ENCODE measurements at regions of chr17 and their contacts with region 1.

Region 1: GRCh38 chr17:28967221-28968140 is 16.2 kb upstream of the PHF12 start:
- H3K4me3 ChIP-seq: no peak overlapping the region
- H3K27ac ChIP-seq: no peak overlapping the region
- H3K4me1 ChIP-seq: no peaks in the 10 kb centered on the region
- CTCF ChIP-seq: no peak

Region 2: DNA sequence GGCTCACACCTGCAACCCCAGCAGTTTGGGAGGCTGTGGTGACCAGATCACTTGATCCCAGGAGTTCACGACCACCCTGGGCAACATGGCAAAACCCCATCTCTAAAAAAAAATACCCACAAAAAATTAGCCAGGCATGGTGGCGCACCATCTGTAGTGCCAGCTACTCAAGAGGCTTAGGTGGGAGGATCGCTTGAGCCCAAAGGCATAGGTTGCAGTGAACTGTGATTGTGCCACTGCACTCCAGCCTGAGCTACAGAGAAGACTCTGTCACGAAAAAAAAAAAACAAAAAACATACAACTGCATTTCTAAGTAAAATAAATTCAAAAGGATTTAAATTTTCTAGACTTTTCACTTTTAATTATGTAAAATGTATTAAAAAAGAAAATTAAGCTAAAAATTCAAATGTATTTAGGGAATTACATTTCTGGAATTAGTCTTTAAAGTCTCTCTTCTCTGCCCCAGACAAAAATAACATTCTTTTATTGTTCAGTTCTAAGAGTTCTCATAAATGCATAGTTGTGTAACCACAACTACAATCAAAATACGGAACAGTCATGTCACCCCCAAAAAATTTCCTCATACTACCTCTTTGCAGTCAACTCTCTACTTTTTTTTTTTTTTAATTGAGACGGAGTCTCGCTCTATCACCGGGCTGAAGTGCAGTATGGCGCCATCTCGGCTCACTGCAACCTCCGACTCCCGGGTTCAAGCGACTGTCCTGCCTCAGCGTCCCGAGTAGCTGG is 139.0 kb before region 1 on chr17:
- CTCF ChIA-PET with region 1: no interaction called
- POLR2A ChIA-PET with region 1: no interaction called
- H3K4me3 ChIP-seq: no peak overlapping the region
- H3K27ac ChIP-seq: no peak overlapping the region
- H3K4me1 ChIP-seq: 0 out of 2 replicates have a peak, but pooled peaks cover 2% of the 10 kb centered on the region
- CTCF ChIP-seq: no peak

Region 3: DNA sequence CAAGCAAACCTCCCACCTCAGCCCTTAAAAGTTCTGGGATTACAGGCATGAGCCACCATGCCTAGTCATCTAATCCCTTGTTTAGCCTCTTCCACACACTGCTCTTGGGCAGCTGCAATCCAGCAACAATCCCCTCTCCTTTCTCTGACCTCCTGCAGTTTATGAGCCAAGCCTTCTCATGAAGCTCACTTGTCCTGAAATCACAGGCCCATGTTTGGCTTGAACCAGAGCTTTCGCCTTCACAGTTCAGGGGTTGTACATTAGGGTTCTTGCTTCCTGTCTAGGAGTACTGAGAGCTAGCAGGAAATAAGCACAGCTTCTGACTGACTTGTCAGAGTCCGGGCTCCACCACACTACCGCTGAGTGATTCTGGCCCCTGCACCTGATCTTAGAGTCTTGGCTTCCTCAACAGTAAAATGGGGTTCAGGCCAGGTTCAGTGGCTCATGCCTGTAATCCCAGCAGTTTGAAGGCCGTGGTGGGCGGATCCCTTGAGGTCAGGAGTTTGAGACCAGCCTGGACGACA is 96.4 kb before region 1 on chr17:
- CTCF ChIA-PET with region 1: no interaction called
- POLR2A ChIA-PET with region 1: no interaction called
- H3K4me3 ChIP-seq: no peak overlapping the region
- H3K27ac ChIP-seq: no peak overlapping the region
- H3K4me1 ChIP-seq: no peaks in the 10 kb centered on the region
- CTCF ChIP-seq: no peak

Region 4: GRCh38 chr17:29032857-29033197 is 65.3 kb after region 1 on chr17:
- CTCF ChIA-PET with region 1: interaction called, 12 read pairs
- POLR2A ChIA-PET with region 1: no interaction called
- H3K4me3 ChIP-seq: no peak overlapping the region
- H3K27ac ChIP-seq: no peak overlapping the region
- H3K4me1 ChIP-seq: no peaks in the 10 kb centered on the region
- CTCF ChIP-seq: no peak

Region 5: GRCh38 chr17:29048440-29049368 is 81.2 kb after region 1 on chr17:
- CTCF ChIA-PET with region 1: interaction called, 14 read pairs
- POLR2A ChIA-PET with region 1: no interaction called
- H3K4me3 ChIP-seq: no peak overlapping the region
- H3K27ac ChIP-seq: no peak overlapping the region
- H3K4me1 ChIP-seq: peaks cover 8% of the 10 kb centered on the region
- CTCF ChIP-seq: no peak

Region 6: GRCh38 chr17:29089601-29090044 is 122.1 kb after region 1 on chr17:
- CTCF ChIA-PET with region 1: interaction called, 19 read pairs
- POLR2A ChIA-PET with region 1: no interaction called
- H3K4me3 ChIP-seq: no peak overlapping the region
- H3K27ac ChIP-seq: no peak overlapping the region
- H3K4me1 ChIP-seq: peaks cover 7% of the 10 kb centered on the region
- CTCF ChIP-seq: no peak

Region 7: GRCh38 chr17:29111816-29112499 is 144.5 kb after region 1 on chr17:
- CTCF ChIA-PET with region 1: interaction called, 680 read pairs
- POLR2A ChIA-PET with region 1: interaction called, 15 read pairs
- H3K4me3 ChIP-seq: no peak overlapping the region
- H3K27ac ChIP-seq: no peak overlapping the region
- H3K4me1 ChIP-seq: no peaks in the 10 kb centered on the region
- CTCF ChIP-seq: peak; percentile 93

Region 8: GRCh38 chr17:29124117-29124924 is 156.8 kb after region 1 on chr17:
- CTCF ChIA-PET with region 1: interaction called, 680 read pairs
- POLR2A ChIA-PET with region 1: interaction called, 3 read pairs
- H3K4me3 ChIP-seq: no peak overlapping the region
- H3K27ac ChIP-seq: no peak overlapping the region
- H3K4me1 ChIP-seq: no peaks in the 10 kb centered on the region
- CTCF ChIP-seq: peak; percentile 69